ENCODE measurements at regions of chr15 and their contacts with region 1.

Region 1: GRCh38 chr15:59917504-59918157 is 86.5 kb upstream of the FOXB1 start:
- DNase-seq: peak; percentile 77
- ATAC-seq: peak; percentile 98
- H3K4me3 ChIP-seq: no peak overlapping the region
- H3K27ac ChIP-seq: no peak overlapping the region
- H3K4me1 ChIP-seq: peaks cover 11% of the 10 kb centered on the region; the same call in 1 of the 2 replicates
- H3K27me3 ChIP-seq: peaks cover 24% of the 10 kb centered on the region
- CTCF ChIP-seq: peak; percentile 74

Region 2: GRCh38 chr15:59689626-59690236 is 227.9 kb before region 1 on chr15:
- CTCF ChIA-PET with region 1: no interaction called
- POLR2A ChIA-PET with region 1: no interaction called
- intact Hi-C with region 1: loop called (anchors 5 kb)
- DNase-seq: peak; percentile 52
- ATAC-seq: peak; percentile 63
- H3K4me3 ChIP-seq: peak overlapping the region; percentile 98
- H3K27ac ChIP-seq: no peak overlapping the region
- H3K4me1 ChIP-seq: peaks cover 19% of the 10 kb centered on the region
- H3K27me3 ChIP-seq: no peaks in the 10 kb centered on the region
- CTCF ChIP-seq: no peak

Region 3: GRCh38 chr15:60079210-60079609 is 161.6 kb after region 1 on chr15:
- CTCF ChIA-PET with region 1: no interaction called
- POLR2A ChIA-PET with region 1: no interaction called
- intact Hi-C with region 1: loop called (anchors 5 kb)
- DNase-seq: peak; percentile 26
- ATAC-seq: no peak; the same call in 1 of the 2 replicates
- H3K4me3 ChIP-seq: no peak overlapping the region
- H3K27ac ChIP-seq: no peak overlapping the region
- H3K4me1 ChIP-seq: peaks cover 21% of the 10 kb centered on the region
- H3K27me3 ChIP-seq: no peaks in the 10 kb centered on the region
- CTCF ChIP-seq: peak; percentile 57

Region 4: DNA sequence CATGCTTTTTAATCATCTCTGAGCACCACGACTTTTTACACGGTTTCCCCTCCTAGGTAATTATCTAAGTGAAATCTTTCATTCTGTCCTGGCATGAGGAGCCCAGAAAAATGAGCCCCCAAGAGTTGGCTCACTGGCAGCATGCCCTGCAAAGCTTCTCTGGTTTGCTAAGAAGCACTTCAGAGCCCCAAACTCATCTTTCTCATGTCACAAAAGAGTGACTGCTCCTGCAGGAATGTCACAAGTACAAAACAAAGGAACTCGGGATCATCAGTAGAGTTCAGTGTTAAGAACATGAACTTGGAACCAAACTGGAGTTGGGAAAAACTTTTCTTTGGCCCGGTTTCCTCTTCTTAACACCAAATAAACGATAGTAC is 210.4 kb after region 1 on chr15:
- CTCF ChIA-PET with region 1: no interaction called
- POLR2A ChIA-PET with region 1: no interaction called
- intact Hi-C with region 1: loop called (anchors 1 kb)
- DNase-seq: peak; percentile 10
- ATAC-seq: peak; percentile 54
- H3K4me3 ChIP-seq: peak overlapping the region; percentile 73
- H3K27ac ChIP-seq: no peak overlapping the region
- H3K4me1 ChIP-seq: no peaks in the 10 kb centered on the region
- H3K27me3 ChIP-seq: 0 out of 2 replicates have a peak, but pooled peaks cover 4% of the 10 kb centered on the region
- CTCF ChIP-seq: no peak

Region 5: DNA sequence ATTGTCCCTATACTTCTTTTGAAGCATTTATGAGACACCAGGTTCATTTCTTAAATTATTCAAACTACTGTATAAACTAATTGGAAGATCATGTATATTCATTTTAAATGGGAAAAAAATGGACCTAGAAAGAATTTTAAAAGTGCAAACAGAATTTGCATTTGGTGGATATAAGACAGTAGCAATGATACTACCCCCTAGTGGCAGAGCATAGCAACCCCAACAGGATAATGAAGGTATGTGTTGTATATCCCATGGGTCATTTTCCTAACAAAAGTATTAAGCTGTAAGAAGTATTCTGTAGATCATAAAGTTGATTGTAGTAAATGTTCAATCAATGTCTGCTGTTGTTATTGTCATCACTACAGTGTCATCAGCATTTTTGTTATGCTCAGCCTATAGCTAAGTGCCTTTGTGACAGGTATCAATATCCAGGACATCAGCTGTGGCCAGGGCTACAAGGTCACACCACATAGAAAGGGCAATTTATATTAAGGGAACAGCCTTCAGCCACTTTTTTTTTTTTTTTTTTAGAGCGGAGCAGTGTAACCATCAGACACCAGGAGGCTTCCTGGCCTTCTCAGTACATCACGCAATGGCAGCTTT is 262.3 kb after region 1 on chr15:
- CTCF ChIA-PET with region 1: interaction called, 3 read pairs
- POLR2A ChIA-PET with region 1: no interaction called
- intact Hi-C with region 1: loop called (anchors 1 kb)
- DNase-seq: peak; percentile 65
- ATAC-seq: peak; percentile 48; the same call in 1 of the 2 replicates
- H3K4me3 ChIP-seq: no peak overlapping the region
- H3K27ac ChIP-seq: no peak overlapping the region
- H3K4me1 ChIP-seq: no peaks in the 10 kb centered on the region
- H3K27me3 ChIP-seq: peaks cover 55% of the 10 kb centered on the region
- CTCF ChIP-seq: peak; percentile 83

Measured in PC-3 (cell line).